ENCODE measurements at regions of chr2 and their contacts with region 1.

Region 1: DNA sequence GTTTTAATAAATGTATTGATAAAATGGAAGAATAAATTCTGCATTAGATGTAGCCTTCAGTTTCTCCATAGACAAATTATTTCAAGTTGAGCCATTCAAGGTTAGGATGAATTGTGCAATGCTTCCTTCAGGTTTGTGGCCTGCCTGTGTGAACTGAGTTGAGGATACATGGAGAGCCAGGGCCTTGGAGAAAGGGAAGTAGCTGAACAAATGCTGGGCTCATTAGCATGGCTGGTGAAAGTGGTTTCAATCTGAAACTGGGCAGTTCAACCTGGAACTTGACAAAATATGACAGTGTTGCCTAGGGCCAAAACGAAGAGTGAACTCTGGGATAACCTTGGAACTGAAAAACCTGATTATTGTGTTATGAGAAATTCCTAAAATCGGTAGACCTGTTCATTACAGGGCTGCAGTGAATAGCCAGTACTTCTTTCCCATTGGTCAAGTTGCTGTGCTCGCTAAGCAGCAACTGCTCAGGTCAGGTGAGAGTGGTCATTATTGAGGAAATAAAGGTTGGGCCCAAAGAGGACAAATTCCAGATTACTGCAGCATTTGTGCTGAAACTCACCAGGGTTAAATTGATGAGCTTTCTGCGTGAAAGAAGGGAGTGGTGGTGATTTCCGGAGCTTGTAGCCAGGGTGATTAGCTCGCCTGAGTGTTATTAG is 12.7 kb downstream of the INPP1 start:
- DNase-seq: no peak
- ATAC-seq: no peak
- H3K4me3 Mint-ChIP-seq: no peak overlapping the region
- H3K27ac Mint-ChIP-seq: no peak overlapping the region
- H3K4me1 Mint-ChIP-seq: peaks cover 19% of the 10 kb centered on the region
- H3K27me3 Mint-ChIP-seq: no peaks in the 10 kb centered on the region

Region 2: GRCh38 chr2:190343500-190344275 is 12.4 kb before region 1 on chr2 and contains the start of gene INPP1:
- CTCF ChIA-PET with region 1: interaction called, 12 read pairs
- POLR2A ChIA-PET with region 1: no interaction called
- intact Hi-C with region 1: no loop called
- DNase-seq: peak; percentile 63
- ATAC-seq: peak; percentile 71
- H3K4me3 Mint-ChIP-seq: peak within 1 kb of the TSS; percentile 66
- H3K27ac Mint-ChIP-seq: peak within 1 kb of the TSS; percentile 75
- H3K4me1 Mint-ChIP-seq: peaks cover 12% of the 10 kb centered on the region
- H3K27me3 Mint-ChIP-seq: no peaks in the 10 kb centered on the region
- total RNA-seq, gene INPP1: 6.7 to 7.8 TPM

Region 3: DNA sequence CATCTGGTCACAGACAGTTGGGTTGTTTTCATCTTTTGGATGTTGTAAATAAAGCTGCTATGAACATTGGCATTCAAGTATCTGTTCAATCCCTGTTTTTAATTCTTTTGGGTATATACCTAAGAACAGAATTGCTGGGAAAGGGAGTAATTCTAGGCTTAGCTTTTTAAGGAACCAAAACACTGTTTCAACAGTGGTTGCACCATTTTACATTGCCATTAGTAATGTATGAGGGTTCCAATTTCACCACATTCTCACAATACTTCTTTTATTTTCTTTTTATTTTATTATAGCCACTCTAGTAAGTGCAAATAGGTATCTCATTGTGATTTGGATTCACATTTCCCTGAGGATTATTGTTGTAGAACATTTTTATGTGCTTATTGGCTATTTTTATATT is 415.6 kb after region 1 on chr2:
- CTCF ChIA-PET with region 1: no interaction called
- POLR2A ChIA-PET with region 1: no interaction called
- intact Hi-C with region 1: no loop called
- DNase-seq: no peak
- ATAC-seq: no peak
- H3K4me3 Mint-ChIP-seq: no peak overlapping the region
- H3K27ac Mint-ChIP-seq: no peak overlapping the region
- H3K4me1 Mint-ChIP-seq: peaks cover 7% of the 10 kb centered on the region
- H3K27me3 Mint-ChIP-seq: no peaks in the 10 kb centered on the region

Region 4: DNA sequence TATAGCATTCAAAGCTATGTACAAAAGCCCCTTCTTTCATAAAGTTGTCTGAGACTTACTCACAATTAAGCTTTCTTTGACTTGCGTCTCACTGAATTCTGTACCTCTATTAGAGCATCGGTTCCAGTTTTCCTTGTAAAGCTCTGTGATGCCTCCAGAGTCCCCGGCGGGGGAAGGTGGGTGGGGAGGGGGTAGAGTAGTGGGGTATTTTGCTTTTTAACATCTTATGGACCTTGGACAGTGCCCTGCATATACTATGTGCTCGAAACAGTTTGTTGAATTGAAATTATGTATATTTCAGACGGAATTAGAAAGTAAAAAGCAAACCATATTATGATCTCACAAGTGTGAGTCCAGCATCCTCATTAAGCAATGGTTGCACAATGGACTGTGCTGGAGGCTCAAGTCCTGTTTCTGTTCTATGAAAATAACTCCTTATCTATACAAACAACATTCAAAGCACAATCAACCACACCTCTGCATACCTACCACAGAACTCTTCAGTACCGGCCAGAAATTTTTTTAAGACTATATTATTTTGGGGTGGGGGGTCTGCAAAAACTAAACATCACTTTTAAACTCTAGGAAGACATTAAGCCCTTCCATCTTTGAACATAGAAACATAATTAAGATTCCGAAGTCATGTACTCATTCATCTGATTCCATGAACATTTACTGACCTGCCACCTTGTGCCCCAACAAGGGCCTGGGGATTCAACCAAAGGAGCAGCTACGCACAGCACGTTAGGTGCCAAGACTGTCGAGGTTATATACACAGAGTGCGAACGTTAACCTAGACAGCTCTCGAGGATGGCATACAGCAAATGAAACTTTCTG is 657.0 kb after region 1 on chr2:
- CTCF ChIA-PET with region 1: no interaction called
- POLR2A ChIA-PET with region 1: no interaction called
- intact Hi-C with region 1: no loop called
- DNase-seq: no peak
- ATAC-seq: peak; percentile 4
- H3K4me3 Mint-ChIP-seq: no peak overlapping the region
- H3K27ac Mint-ChIP-seq: no peak overlapping the region
- H3K4me1 Mint-ChIP-seq: peaks cover 40% of the 10 kb centered on the region
- H3K27me3 Mint-ChIP-seq: no peaks in the 10 kb centered on the region